Activated CD8-positive, alpha-beta T cell treated with anti-CD3 and anti-CD28 coated beads, Interleukin-2, amount 10 ng/mL, durations not matched to agents 7 days and 5 days (primary cell): ENCODE measurements at regions of chr10 and their contacts with region 1.

Region 1: DNA sequence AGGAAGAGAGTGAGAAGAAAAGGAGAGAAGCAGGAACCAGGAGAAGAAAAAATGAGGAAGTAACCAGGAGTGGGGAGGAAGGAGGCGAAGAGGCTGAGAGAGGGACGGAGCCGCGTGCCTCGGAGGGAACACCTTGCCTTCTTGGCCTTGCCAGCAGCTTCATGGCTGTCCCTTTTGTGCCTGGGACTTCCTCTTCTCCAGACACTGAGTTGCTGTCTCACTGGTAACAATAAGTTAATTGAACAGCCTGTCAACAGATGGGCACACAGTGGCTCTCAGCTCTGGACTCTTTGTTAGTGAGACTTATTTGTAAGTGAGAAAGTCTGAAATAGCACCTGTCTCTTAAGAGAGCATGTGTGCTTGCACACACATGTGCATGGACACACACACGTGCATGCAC is 83.2 kb downstream of the GATA3 start:
- DNase-seq: peak; percentile 54
- ATAC-seq: peak; percentile 61
- H3K4me3 Mint-ChIP-seq: peak overlapping the region; percentile 79
- H3K27ac Mint-ChIP-seq: peak overlapping the region; percentile 93
- H3K4me1 Mint-ChIP-seq: peaks cover 66% of the 10 kb centered on the region
- H3K27me3 Mint-ChIP-seq: no peaks in the 10 kb centered on the region

Region 2: GRCh38 chr10:8059959-8060703 is 77.6 kb before region 1 on chr10:
- CTCF ChIA-PET with region 1: no interaction called
- POLR2A ChIA-PET with region 1: interaction called, 11 read pairs
- DNase-seq: peak; percentile 85
- ATAC-seq: peak; percentile 50
- H3K4me3 Mint-ChIP-seq: peak overlapping the region; percentile 97
- H3K27ac Mint-ChIP-seq: peak overlapping the region; percentile 97
- H3K4me1 Mint-ChIP-seq: peaks cover 77% of the 10 kb centered on the region
- H3K27me3 Mint-ChIP-seq: no peaks in the 10 kb centered on the region